SK-N-SH (cell line): ENCODE measurements at regions of chr12 and their contacts with region 1.

Region 1: GRCh38 chr12:105067511-105068031 is 16.7 kb downstream of the ALDH1L2 start:
- DNase-seq: no peak
- H3K4me3 ChIP-seq: no peak overlapping the region
- H3K27ac ChIP-seq: no peak overlapping the region
- H3K4me1 ChIP-seq: no peaks in the 10 kb centered on the region
- H3K27me3 ChIP-seq: no peaks in the 10 kb centered on the region
- CTCF ChIP-seq: no peak
- EP300 ChIP-seq: no peak
- RAD21 ChIP-seq: no peak

Region 2: DNA sequence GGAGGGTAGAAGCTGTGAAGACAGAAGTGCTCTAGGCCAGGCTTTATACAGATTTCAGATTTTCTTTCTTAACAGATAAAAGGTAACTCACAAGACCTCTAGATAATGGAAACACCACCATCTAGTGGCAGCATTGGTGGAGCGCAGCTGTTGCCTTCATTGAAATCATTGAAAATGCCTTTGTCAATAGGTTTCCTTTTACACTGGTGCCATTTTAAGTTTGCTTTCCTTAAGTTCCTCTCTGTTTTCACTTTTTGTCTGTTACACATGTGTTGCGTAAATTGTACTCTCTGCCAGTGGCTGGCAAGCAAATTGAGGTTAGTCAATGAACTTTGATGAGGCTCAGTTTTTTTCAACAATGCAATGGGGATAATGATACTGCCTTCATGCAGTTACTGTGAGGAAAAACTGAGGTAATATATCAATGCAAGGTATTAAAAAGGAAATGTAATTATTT is 14.4 kb before region 1 on chr12:
- CTCF ChIA-PET with region 1: interaction called, 18 read pairs
- POLR2A ChIA-PET with region 1: no interaction called
- DNase-seq: peak; percentile 55
- H3K4me3 ChIP-seq: no peak overlapping the region; a peak in 1 of 4 replicates
- H3K27ac ChIP-seq: no peak overlapping the region
- H3K4me1 ChIP-seq: no peaks in the 10 kb centered on the region; a peak in 1 of 4 replicates
- H3K27me3 ChIP-seq: no peaks in the 10 kb centered on the region
- CTCF ChIP-seq: peak; percentile 94
- EP300 ChIP-seq: no peak
- RAD21 ChIP-seq: peak; percentile 95

Region 3: GRCh38 chr12:105100998-105101397 is 33.4 kb after region 1 on chr12:
- CTCF ChIA-PET with region 1: no interaction called
- POLR2A ChIA-PET with region 1: no interaction called
- DNase-seq: no peak
- H3K4me3 ChIP-seq: no peak overlapping the region
- H3K27ac ChIP-seq: no peak overlapping the region; a peak in 1 of 4 replicates
- H3K4me1 ChIP-seq: 0 out of 4 replicates have a peak, but pooled peaks cover 0 to 4% of the 10 kb centered on the region in 2 experiments
- H3K27me3 ChIP-seq: no peaks in the 10 kb centered on the region
- CTCF ChIP-seq: peak; percentile 49
- EP300 ChIP-seq: no peak
- RAD21 ChIP-seq: peak; percentile 48

Region 4: GRCh38 chr12:105741744-105742566 is 674.4 kb after region 1 on chr12:
- CTCF ChIA-PET with region 1: no interaction called
- POLR2A ChIA-PET with region 1: no interaction called
- DNase-seq: no peak
- H3K4me3 ChIP-seq: no peak overlapping the region
- H3K27ac ChIP-seq: peak overlapping the region in 1 of 2 experiments; percentile 41; a peak in 1 of 4 replicates
- H3K4me1 ChIP-seq: peaks cover 5 to 13% of the 10 kb centered on the region in 2 experiments; a peak in 2 of 4 replicates
- H3K27me3 ChIP-seq: no peaks in the 10 kb centered on the region
- CTCF ChIP-seq: no peak
- EP300 ChIP-seq: 0 out of 4 replicates have a peak, but pooled peaks of 1 of the 2 experiments have one; percentile 26
- RAD21 ChIP-seq: no peak